Caco-2 (cell line): ENCODE measurements at regions of chr2 and their contacts with region 1.

Region 1: DNA sequence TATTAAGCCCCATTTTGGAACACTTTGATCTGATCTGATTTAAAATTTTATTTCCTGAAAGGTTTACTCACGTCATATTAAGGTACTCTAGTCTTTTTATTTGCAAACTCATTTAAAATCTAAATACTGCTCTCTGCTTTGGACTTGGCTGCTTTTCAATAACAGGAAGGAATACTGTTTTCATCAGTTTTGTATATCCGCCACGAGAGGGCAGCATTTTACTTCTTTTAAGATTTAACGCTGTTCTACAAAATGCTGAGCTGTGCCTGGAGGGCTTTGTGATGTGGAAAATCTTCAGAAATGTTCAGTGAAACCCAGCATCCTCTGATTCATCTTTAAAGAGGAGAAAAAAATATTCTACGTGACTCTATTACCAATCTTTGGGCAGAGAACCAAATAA is 37.5 kb upstream of the SLC38A11 start:
- DNase-seq: peak in 1 of 2 experiments; percentile 55
- H3K4me3 ChIP-seq: no peak overlapping the region
- H3K4me3 Mint-ChIP-seq: no peak overlapping the region
- H3K27ac Mint-ChIP-seq: no peak overlapping the region
- H3K4me1 ChIP-seq: no peaks in the 10 kb centered on the region
- H3K4me1 Mint-ChIP-seq: no peaks in the 10 kb centered on the region
- H3K27me3 ChIP-seq: no peaks in the 10 kb centered on the region
- H3K27me3 Mint-ChIP-seq: no peaks in the 10 kb centered on the region
- CTCF ChIP-seq: peak; percentile 48 to 57

Region 2: DNA sequence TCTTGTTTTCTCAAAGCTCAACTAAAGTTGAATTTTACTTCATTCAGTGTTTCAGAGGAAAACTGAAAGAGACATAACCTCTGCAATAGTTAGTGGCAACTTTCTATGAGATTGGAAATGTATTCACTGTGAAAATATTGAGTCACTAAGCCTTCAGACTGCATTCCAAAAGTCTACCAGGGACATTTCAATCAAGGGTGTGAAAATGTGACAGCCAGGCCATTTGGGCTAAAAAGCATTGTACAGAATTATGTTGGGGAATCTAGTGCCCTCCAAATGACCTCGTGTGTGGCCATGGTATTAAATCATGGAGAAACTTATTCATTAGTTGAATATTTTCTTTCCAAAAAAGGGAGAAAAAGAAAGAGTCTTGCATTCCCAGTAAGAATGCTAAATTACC is 623.5 kb before region 1 on chr2:
- CTCF ChIA-PET with region 1: no interaction called
- POLR2A ChIA-PET with region 1: no interaction called
- intact Hi-C with region 1: no loop called
- DNase-seq: no peak
- H3K4me3 ChIP-seq: no peak overlapping the region
- H3K4me3 Mint-ChIP-seq: no peak overlapping the region
- H3K27ac Mint-ChIP-seq: no peak overlapping the region
- H3K4me1 ChIP-seq: no peaks in the 10 kb centered on the region
- H3K4me1 Mint-ChIP-seq: no peaks in the 10 kb centered on the region
- H3K27me3 ChIP-seq: no peaks in the 10 kb centered on the region
- H3K27me3 Mint-ChIP-seq: no peaks in the 10 kb centered on the region
- CTCF ChIP-seq: no peak

Region 3: DNA sequence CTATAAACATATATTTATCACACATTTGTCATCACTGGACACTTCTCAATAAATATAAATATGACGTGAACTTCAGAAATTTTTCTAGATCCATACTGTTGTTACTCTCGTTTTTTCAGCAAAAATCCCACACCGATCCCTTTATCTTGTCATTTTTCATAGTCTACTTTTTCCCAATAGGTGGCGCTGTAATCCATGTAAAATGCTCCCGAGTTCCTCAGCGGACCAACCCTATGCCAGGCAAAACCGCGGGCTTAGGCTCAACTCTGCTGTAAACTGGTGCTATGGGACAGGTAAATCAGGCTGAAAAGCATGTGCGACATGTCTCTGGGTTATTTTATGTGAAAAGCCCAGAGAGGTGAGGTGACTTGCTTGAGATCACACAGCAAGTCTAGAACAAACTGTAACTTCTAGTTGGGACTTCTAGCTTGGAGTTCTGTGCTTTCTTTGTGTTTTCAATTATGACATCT is 255.2 kb before region 1 on chr2:
- CTCF ChIA-PET with region 1: no interaction called
- POLR2A ChIA-PET with region 1: no interaction called
- intact Hi-C with region 1: loop called (anchors 1 kb)
- DNase-seq: peak; percentile 75 to 80
- H3K4me3 ChIP-seq: no peak overlapping the region
- H3K4me3 Mint-ChIP-seq: no peak overlapping the region
- H3K27ac Mint-ChIP-seq: no peak overlapping the region
- H3K4me1 ChIP-seq: peaks cover 25% of the 10 kb centered on the region
- H3K4me1 Mint-ChIP-seq: peaks cover 19% of the 10 kb centered on the region
- H3K27me3 ChIP-seq: no peaks in the 10 kb centered on the region
- H3K27me3 Mint-ChIP-seq: no peaks in the 10 kb centered on the region
- CTCF ChIP-seq: peak; percentile 65 to 67

Region 4: GRCh38 chr2:165015052-165015642 is 22.3 kb after region 1 on chr2:
- CTCF ChIA-PET with region 1: interaction called, 10 read pairs
- POLR2A ChIA-PET with region 1: no interaction called
- intact Hi-C with region 1: loop called (anchors 1 kb)
- DNase-seq: peak; percentile 69 to 81
- H3K4me3 ChIP-seq: no peak overlapping the region
- H3K4me3 Mint-ChIP-seq: no peak overlapping the region
- H3K27ac Mint-ChIP-seq: no peak overlapping the region
- H3K4me1 ChIP-seq: 0 out of 2 replicates have a peak, but pooled peaks cover 3% of the 10 kb centered on the region
- H3K4me1 Mint-ChIP-seq: no peaks in the 10 kb centered on the region
- H3K27me3 ChIP-seq: no peaks in the 10 kb centered on the region
- H3K27me3 Mint-ChIP-seq: peaks cover 7% of the 10 kb centered on the region
- CTCF ChIP-seq: peak; percentile 83 to 95

Region 5: DNA sequence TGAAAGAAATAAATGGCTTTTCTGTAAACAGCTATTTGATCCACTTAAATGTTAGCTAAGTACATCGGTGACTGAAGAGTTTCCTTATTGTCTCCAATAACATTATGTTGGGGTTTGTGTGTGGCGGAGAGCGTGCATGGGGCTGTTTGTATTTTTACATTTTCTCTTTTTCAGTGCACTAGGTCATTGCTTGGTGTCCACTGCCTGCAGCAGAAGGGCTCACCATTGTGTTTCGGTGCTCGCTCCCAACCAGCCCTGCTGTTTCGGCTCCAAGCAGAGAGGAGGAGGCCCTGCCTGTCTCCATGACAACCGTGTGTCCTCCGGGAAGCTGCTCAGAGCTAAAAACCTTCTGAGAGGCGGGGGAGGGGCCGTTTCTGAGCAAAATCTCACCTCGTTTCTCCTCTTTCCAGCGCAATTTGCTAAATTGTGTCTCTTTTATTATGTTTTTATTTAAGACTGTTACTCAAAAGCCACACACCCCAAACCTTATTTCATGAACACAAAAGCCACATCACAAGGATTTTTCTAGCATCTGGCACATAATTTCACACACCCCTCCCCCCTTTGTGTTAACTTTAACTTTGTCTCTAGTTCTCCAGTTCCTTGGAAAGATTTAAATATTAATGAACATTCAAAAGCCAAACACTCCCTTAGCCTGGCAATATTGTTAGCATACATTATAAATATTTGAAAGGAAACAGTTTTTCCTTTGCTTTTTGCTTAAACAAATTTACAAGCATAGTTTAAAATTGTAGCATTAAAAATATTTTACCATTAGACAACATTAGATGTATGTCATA is 75.3 kb after region 1 on chr2:
- CTCF ChIA-PET with region 1: no interaction called
- POLR2A ChIA-PET with region 1: no interaction called
- intact Hi-C with region 1: no loop called
- DNase-seq: peak; percentile 74 to 84
- H3K4me3 ChIP-seq: no peak overlapping the region
- H3K4me3 Mint-ChIP-seq: peak overlapping the region; percentile 43
- H3K27ac Mint-ChIP-seq: peak overlapping the region; percentile 51
- H3K4me1 ChIP-seq: peaks cover 21% of the 10 kb centered on the region
- H3K4me1 Mint-ChIP-seq: peaks cover 21% of the 10 kb centered on the region
- H3K27me3 ChIP-seq: no peaks in the 10 kb centered on the region
- H3K27me3 Mint-ChIP-seq: no peaks in the 10 kb centered on the region
- CTCF ChIP-seq: no peak

Region 6: GRCh38 chr2:165293440-165294353 is 300.9 kb after region 1 on chr2:
- CTCF ChIA-PET with region 1: interaction called, 3 read pairs
- POLR2A ChIA-PET with region 1: no interaction called
- intact Hi-C with region 1: loop called (anchors 1 kb)
- DNase-seq: peak; percentile 60 to 85
- H3K4me3 ChIP-seq: no peak overlapping the region
- H3K4me3 Mint-ChIP-seq: no peak overlapping the region
- H3K27ac Mint-ChIP-seq: no peak overlapping the region
- H3K4me1 ChIP-seq: no peaks in the 10 kb centered on the region
- H3K4me1 Mint-ChIP-seq: no peaks in the 10 kb centered on the region
- H3K27me3 ChIP-seq: no peaks in the 10 kb centered on the region
- H3K27me3 Mint-ChIP-seq: peaks cover 15% of the 10 kb centered on the region
- CTCF ChIP-seq: peak; percentile 50 to 83

Region 7: DNA sequence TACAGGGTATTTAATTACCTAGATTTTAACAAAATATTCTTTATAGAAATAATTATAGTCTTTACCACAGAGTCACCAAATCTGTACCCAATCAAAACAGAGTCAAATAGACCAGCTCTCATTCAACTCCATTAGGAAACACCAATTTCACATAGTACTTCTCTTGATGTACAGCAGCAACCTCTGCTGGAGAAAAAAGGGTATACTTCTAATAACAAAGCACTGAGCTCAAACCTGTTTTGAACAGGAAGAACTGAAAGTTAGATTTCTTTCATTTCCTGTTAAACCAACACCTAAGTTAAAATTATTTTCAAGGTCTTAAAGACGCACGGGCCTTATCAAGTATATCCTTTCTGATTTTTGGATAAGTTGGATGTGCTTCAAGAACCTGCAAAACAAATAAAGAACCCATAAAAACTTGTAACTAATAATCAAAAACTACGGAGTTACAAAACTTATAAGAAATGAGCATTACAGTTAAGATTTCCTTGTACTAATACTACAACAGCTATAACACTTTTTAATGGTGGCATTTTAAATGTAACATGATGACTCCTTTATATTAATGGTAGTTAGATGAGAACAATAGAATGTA is 881.7 kb after region 1 on chr2:
- CTCF ChIA-PET with region 1: no interaction called
- POLR2A ChIA-PET with region 1: no interaction called
- intact Hi-C with region 1: loop called (anchors 1 kb)
- DNase-seq: peak in 1 of 2 experiments; percentile 42
- H3K4me3 ChIP-seq: no peak overlapping the region
- H3K4me3 Mint-ChIP-seq: no peak overlapping the region
- H3K27ac Mint-ChIP-seq: no peak overlapping the region
- H3K4me1 ChIP-seq: peaks cover 8% of the 10 kb centered on the region
- H3K4me1 Mint-ChIP-seq: peaks cover 12% of the 10 kb centered on the region
- H3K27me3 ChIP-seq: no peaks in the 10 kb centered on the region
- H3K27me3 Mint-ChIP-seq: no peaks in the 10 kb centered on the region
- CTCF ChIP-seq: peak; percentile 48 to 60